Activated CD4-positive, alpha-beta T cell treated with anti-CD3 and anti-CD28 coated beads for 36 hours (primary cell): ENCODE measurements at regions of chrX and their contacts with region 1.

Region 1: GRCh38 chrX:45710081-45710801 is 509.6 kb upstream of the DIPK2B start:
- DNase-seq: peak; percentile 78
- ATAC-seq: peak; percentile 90
- H3K4me3 Mint-ChIP-seq: no peak overlapping the region
- H3K27ac Mint-ChIP-seq: peak overlapping the region; percentile 85
- H3K4me1 Mint-ChIP-seq: peaks cover 62% of the 10 kb centered on the region
- H3K27me3 Mint-ChIP-seq: no peaks in the 10 kb centered on the region

Region 2: DNA sequence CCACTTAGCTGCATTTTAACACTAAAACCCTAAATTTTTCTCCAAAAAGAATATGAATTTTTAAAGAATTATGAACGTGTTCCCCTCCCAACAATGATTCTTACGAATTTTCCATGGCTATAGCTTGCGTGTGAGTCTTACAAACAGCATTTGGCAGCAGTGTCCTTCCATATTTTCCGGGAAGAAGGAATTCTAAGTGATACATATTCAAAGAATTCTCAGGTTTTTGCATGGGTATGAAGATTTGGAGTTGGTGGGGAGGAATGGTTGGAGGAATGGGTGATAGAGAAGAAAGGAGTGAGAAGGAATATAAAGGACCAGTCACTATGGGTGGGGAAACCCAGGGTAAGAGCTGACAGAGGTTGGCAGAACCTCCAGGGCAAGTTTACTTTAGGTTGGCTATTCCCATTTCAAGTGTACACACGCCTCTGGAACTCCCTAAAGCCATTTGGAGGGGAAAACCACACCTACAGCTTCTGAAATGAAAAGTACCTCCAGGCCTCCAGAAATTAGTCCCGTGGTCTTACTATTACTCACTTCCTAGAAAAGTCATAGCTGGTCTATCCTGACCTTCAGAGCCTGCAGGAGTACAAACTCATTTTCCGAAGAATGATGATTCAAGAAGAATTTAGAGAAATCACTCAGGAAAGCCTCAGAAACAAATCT is 88.7 kb before region 1 on chrX:
- CTCF ChIA-PET with region 1: interaction called, 6 read pairs
- POLR2A ChIA-PET with region 1: interaction called, 8 read pairs
- intact Hi-C with region 1: loop called (anchors 1 kb)
- DNase-seq: peak; percentile 20
- ATAC-seq: peak; percentile 88
- H3K4me3 Mint-ChIP-seq: no peak overlapping the region
- H3K27ac Mint-ChIP-seq: peak overlapping the region; percentile 37
- H3K4me1 Mint-ChIP-seq: peaks cover 30% of the 10 kb centered on the region
- H3K27me3 Mint-ChIP-seq: peaks cover 3% of the 10 kb centered on the region

Region 3: DNA sequence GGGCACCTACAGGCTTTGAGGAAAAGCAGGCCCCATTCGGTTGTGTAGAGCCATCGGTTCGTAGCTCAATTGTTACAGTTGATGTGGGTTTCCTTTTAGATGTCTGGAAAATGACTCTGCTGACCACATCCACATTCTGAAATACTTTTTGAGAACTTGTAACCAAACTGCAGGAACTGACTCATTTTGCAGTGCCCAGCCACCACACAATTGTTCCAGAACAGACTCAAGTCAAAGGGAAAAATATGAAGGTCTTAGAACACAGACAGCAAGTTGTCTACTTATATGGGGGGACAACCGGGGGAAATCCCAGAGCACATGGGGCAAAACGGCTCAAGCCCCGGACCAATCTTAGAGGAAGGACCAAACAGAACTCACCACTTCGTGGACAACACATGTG is 48.1 kb after region 1 on chrX:
- CTCF ChIA-PET with region 1: interaction called, 3 read pairs
- POLR2A ChIA-PET with region 1: interaction called, 16 read pairs
- intact Hi-C with region 1: loop called (anchors 1 kb)
- DNase-seq: peak; percentile 66
- ATAC-seq: peak; percentile 27
- H3K4me3 Mint-ChIP-seq: peak overlapping the region; percentile 57
- H3K27ac Mint-ChIP-seq: peak overlapping the region; percentile 90
- H3K4me1 Mint-ChIP-seq: peaks cover 72% of the 10 kb centered on the region
- H3K27me3 Mint-ChIP-seq: no peaks in the 10 kb centered on the region

Region 4: GRCh38 chrX:45801554-45801953 is 91.3 kb after region 1 on chrX:
- CTCF ChIA-PET with region 1: no interaction called
- POLR2A ChIA-PET with region 1: interaction called, 11 read pairs
- intact Hi-C with region 1: loop called (anchors 1 kb)
- DNase-seq: no peak
- ATAC-seq: peak; percentile 55
- H3K4me3 Mint-ChIP-seq: peak overlapping the region; percentile 63
- H3K27ac Mint-ChIP-seq: peak overlapping the region; percentile 92
- H3K4me1 Mint-ChIP-seq: peaks cover 71% of the 10 kb centered on the region
- H3K27me3 Mint-ChIP-seq: no peaks in the 10 kb centered on the region

Region 5: GRCh38 chrX:45849253-45849862 is 139.1 kb after region 1 on chrX:
- CTCF ChIA-PET with region 1: no interaction called
- POLR2A ChIA-PET with region 1: no interaction called
- intact Hi-C with region 1: loop called (anchors 2 kb)
- DNase-seq: peak; percentile 35
- ATAC-seq: no peak
- H3K4me3 Mint-ChIP-seq: peak overlapping the region; percentile 99
- H3K27ac Mint-ChIP-seq: peak overlapping the region; percentile 98
- H3K4me1 Mint-ChIP-seq: peaks cover 39% of the 10 kb centered on the region
- H3K27me3 Mint-ChIP-seq: no peaks in the 10 kb centered on the region